Left cardiac atrium (tissue), 4 donors: ENCODE measurements at regions of chr17 and their contacts with region 1.

Region 1: DNA sequence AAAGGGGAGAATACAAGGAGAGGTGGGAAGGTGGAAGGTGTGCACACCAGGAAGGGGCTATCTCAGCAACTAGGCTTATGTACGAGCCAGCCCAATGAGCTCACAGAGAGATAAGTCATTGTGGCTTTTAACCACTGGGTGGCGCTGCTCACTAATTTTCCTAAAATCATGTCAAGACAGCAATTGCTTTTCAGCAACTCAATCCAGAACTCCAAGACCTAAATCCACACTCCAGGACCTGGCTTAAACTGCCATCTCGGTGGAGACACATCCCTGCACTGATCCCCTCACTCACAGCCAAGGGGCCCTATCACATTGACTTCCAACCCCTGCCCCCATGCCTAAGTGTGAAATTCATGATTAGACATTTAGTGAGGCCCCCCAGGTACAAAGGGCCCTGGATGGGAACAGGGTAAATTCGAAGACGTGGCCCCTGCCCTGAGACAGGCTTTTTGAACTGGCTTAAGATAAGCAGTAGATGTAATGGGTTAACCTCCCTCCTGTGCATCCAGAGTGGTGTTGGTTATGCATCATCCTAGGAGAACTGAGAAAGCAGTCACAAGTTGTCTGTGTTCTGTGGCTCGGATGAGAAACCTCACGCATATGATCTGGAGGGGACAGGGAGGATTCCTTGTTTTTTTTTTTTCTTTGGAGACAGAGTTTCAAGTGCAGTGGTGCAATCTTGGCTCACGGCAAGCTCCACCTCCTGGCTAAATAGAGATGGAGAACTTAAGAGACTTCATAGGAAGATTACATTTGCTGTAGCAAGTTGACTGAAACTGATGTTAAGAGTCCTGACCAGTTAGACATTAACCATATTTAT is 11.5 kb downstream of the CCL16 start:
- DNase-seq: peak; percentile 75
- ATAC-seq: peak; percentile 78 to 82

Region 2: DNA sequence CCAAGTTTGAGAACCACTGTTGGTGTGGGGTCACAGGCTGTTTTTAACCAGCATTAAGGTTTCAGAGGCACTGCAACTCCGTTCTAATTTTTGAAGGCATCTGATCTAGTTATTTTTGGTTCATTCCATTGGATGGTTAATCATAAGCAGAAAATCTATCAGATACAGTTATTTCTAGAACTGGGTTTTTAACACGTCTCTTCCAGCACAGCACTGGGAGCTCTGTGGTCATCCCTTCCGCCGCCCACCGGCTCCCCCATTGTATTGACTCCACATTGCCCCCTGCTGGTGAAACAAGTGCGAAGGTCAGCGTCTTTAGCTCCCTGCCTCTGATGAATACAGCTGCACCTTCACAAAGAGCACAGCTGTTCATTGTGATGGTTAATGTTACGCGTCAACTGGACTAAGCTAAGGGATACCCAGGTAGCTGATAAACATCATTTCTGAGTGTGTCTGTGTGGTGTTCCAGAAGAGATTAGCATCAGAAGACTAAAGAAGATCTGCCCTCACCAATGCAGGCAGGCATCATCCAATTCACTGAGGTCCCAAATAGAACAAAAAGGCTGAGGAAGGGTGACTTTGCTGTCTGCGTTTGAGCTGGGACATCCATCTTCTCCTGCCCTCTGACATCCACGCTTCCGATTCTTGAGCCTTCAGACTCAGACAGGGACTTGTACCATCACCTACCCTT is 102.8 kb after region 1 on chr17:
- intact Hi-C with region 1: loop called in 1 of 2 experiments (anchors 5 kb)
- DNase-seq: peak; percentile 48
- ATAC-seq: peak; percentile 15 to 57

Region 3: DNA sequence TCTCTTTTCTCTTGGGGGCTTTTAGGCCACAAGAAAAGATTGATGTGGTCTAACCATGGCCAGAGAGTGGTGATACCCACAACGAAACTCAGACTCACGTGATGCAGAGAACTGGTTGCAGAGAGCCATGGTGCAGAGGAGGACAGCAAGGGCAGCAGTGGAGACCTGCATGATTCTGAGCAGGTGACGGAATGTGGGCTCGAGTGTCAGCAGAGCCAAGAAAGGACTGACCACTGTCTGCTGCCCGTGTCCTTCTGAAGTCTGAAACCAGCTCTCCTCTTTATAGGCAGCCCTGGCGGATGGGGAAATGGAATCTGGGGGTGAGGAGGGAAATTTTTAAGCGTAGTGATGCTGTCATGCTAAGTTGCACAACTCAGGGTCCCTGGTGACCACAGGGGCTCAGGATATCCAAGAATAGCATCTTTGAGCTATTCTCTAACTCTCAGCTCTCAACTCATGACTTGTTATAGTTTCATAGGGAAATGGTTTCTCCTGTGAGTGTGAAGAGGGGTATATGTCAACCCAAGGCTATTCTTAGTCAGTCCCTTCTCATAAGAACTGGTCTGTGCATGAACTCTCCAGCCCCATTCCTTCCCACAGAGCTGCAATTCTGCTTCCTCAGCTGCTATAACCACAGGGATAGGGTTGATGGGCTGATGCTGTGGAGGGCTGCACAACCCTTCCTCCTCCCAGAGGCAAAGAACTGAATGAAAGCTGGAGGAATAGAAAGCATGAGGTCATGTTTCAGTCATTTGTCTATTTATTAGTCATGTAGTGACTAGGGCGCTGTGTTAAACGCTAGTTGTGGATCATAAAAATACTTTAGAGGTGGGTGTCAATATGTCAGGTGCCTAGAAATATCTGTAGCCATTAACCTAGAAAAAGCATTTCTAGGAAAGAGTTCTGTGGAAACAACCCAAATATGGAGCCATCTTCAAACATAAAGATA is 120.4 kb after region 1 on chr17 and contains the start of gene CCL3:
- intact Hi-C with region 1: no loop called
- DNase-seq: no peak
- ATAC-seq: peak; percentile 62 to 66
- total RNA-seq, gene CCL3: 0.82 to 1.1 TPM

Region 4: DNA sequence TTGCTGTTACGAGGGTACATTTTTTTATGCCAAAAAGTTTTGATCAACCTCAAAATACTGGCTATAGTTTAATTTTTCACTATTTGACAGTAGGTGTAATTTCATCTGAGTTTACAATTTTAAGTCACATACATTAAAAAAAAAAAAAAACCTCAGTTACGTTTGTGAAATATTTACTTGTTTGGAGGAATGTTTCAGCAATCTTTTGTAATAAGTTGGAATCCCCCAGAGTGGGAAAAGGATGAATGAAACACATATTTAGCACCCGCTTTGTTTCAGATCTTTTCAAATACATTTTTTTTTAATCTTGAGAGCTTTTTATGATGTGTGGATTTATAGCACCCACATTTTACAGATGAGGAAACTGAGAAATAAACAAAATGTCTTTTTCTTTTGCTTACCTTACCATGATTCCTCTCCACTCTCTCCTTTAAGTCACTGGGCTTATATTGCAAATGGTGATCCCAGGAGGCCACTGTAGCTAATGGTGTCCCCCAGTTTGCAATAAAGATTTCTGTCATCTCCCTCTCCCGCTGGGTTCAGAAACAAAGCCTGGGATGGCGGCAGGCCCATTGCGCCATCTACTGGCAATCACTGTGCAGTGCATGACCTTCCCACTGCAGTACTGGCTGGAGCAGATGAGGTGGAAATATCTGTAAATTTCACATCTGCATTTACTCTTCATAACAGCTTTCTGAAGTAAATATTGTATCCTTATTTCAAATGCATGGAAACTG is 179.0 kb after region 1 on chr17:
- intact Hi-C with region 1: loop called in 1 of 2 experiments (anchors 2 kb)
- DNase-seq: peak; percentile 79
- ATAC-seq: peak; percentile 92 to 93

Region 5: DNA sequence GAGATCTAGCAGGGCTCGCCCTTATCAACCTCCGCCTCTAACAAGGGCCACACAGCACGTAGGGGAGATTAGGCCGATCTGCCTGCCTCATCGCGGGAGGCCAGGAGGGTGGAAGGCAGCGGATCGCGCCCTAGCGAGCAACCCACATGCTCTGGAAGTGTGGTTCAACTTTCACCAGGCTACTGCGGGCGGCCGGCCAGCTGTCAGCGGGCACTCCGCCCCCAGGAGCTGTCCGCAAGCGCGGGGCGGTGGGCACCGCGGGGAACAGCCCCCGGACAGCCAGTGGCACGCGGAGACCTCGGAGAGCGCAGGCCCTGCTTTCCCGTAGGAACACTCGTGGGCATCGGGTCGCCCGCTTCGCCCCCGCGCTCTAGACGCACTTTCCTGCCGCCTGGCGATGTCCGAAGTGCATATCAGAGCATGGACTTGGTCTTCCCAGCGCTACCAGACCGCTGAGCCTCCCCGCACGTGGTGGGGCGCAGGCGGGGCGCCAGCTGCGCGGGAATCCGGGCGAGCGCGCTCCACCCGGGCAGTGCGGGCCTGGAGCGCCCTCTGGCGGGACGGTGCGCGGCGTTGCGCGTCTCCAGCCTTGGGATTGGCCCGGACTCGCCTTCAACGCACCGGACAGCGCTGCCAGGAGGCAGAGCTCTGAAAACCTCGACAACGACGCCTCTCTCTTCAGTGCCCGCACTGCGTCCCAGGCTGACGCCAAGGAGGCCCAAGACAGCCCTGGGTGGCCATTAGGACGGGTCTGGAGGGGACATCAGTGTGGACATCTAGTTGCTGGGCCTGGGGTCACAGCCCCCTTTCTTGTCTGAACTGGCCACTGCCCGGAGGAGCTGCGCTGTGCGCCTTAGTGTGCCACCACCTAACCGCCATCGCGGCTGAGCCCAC is 513.1 kb after region 1 on chr17:
- intact Hi-C with region 1: loop called in 1 of 2 experiments (anchors 2 kb)
- DNase-seq: peak; percentile 88
- ATAC-seq: peak; percentile 88 to 89